Activated CD4-positive, alpha-beta memory T cell treated with anti-CD3 and anti-CD28 coated beads for 36 hours (primary cell): ENCODE measurements at regions of chr6 and their contacts with region 1.

Region 1: GRCh38 chr6:37566111-37566949 is 66.6 kb upstream of the CCDC167 start:
- DNase-seq: peak; percentile 82
- H3K4me3 Mint-ChIP-seq: peak overlapping the region; percentile 27
- H3K27ac Mint-ChIP-seq: no peak overlapping the region
- H3K4me1 Mint-ChIP-seq: peaks cover 5% of the 10 kb centered on the region
- H3K27me3 Mint-ChIP-seq: no peaks in the 10 kb centered on the region

Region 2: DNA sequence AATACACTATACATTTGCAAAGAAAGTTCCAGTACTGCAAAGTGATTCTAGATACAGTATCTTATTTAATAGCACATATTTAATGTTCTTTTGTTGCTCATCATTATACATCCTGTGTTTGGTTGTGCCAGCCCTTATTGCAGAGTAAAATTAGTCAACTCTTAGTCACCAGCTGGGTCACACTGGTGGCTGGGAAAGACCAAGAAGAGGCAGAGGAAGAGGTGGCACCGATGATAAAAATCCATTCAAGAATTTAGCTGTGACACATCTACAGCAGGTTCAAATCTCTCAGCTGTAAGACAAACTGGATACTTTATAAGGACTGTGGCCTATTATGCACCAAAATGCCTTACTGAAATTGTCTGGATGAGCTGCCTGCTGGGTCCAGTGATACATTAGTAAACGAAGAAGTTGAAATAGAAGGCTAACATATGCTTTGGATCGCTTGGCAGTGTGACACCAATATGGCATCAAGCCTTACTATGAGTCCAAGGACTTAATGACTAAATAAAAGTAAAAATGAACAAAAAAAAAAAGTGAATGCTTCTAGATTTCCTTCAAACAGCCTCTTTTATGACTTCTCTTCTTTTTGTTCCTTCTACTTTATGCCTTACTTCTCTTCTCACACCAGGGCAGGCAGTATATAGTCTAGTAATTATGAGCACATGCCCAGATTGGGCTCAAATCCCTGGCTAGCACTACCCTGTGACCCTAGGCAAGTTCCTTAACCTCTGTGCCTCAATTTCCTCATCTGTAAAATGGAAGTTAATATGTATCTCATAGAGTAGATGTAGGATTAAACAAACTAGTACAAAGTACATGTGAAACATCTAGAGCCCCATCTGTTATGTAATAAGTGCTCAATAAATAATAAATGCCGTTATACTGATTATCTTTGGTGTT is 241.9 kb before region 1 on chr6:
- CTCF ChIA-PET with region 1: interaction called, 8 read pairs
- POLR2A ChIA-PET with region 1: no interaction called
- intact Hi-C with region 1: loop called (anchors 2 kb)
- DNase-seq: peak; percentile 67
- H3K4me3 Mint-ChIP-seq: no peak overlapping the region
- H3K27ac Mint-ChIP-seq: no peak overlapping the region
- H3K4me1 Mint-ChIP-seq: peaks cover 22% of the 10 kb centered on the region
- H3K27me3 Mint-ChIP-seq: no peaks in the 10 kb centered on the region

Region 3: DNA sequence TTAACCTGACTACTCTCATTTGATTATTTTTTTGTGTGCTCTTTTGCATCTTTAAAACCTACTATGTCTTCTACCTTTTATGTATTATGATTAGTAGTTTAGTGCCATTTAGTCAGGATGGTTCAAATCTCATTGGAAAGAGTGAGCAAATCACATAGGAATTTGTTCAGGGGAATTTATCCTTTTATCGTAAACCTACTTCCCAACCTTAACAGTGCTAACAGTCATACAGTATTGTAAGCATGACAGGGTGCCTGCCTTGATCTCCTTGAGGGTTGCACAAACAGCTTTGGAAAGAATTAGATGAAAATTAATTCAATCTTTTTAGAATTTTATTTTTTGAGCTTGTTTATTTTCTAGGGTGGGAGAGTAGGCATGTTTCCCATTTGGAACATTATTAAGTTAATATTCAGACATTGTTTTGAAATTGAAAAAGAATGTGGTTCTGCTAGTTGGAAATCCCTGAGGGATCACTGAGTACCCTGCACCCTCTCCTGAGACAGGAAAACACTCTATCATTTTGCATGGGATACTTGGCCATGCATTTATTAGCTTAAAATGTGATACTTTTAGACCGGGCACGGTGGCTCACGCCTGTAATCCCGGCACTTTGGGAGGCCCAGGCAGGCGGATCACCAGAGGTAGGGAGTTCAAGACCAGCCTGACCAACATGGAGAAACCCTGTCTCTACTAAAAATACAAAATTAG is 194.1 kb before region 1 on chr6:
- CTCF ChIA-PET with region 1: no interaction called
- POLR2A ChIA-PET with region 1: no interaction called
- intact Hi-C with region 1: no loop called
- DNase-seq: no peak
- H3K4me3 Mint-ChIP-seq: no peak overlapping the region
- H3K27ac Mint-ChIP-seq: no peak overlapping the region
- H3K4me1 Mint-ChIP-seq: peaks cover 5% of the 10 kb centered on the region
- H3K27me3 Mint-ChIP-seq: no peaks in the 10 kb centered on the region

Region 4: DNA sequence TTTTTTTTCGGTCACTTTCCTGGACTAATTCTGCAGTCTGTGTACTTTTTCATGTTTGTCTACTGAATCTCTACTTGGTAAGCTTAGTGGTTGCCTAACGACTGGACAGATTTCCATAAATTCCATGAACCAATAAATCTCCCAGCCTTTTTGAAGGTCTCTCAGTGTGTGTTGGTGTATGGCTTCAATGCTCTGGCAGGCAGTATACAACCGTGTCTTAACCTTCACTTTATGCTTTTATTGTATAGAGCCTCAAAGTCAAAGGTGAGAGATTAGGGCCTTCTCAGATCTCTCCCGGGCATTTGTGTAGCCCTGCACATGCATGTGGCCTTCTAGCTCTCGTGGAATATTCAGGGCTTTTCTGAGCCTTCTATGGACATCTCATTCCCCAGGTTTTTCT is 147.6 kb before region 1 on chr6:
- CTCF ChIA-PET with region 1: no interaction called
- POLR2A ChIA-PET with region 1: no interaction called
- intact Hi-C with region 1: no loop called
- DNase-seq: no peak
- H3K4me3 Mint-ChIP-seq: no peak overlapping the region
- H3K27ac Mint-ChIP-seq: no peak overlapping the region
- H3K4me1 Mint-ChIP-seq: no peaks in the 10 kb centered on the region
- H3K27me3 Mint-ChIP-seq: no peaks in the 10 kb centered on the region

Region 5: GRCh38 chr6:37489660-37490361 is 76.5 kb before region 1 on chr6:
- CTCF ChIA-PET with region 1: interaction called, 43 read pairs
- POLR2A ChIA-PET with region 1: no interaction called
- intact Hi-C with region 1: no loop called
- DNase-seq: peak; percentile 51
- H3K4me3 Mint-ChIP-seq: no peak overlapping the region
- H3K27ac Mint-ChIP-seq: peak overlapping the region; percentile 76
- H3K4me1 Mint-ChIP-seq: peaks cover 70% of the 10 kb centered on the region
- H3K27me3 Mint-ChIP-seq: no peaks in the 10 kb centered on the region

Region 6: DNA sequence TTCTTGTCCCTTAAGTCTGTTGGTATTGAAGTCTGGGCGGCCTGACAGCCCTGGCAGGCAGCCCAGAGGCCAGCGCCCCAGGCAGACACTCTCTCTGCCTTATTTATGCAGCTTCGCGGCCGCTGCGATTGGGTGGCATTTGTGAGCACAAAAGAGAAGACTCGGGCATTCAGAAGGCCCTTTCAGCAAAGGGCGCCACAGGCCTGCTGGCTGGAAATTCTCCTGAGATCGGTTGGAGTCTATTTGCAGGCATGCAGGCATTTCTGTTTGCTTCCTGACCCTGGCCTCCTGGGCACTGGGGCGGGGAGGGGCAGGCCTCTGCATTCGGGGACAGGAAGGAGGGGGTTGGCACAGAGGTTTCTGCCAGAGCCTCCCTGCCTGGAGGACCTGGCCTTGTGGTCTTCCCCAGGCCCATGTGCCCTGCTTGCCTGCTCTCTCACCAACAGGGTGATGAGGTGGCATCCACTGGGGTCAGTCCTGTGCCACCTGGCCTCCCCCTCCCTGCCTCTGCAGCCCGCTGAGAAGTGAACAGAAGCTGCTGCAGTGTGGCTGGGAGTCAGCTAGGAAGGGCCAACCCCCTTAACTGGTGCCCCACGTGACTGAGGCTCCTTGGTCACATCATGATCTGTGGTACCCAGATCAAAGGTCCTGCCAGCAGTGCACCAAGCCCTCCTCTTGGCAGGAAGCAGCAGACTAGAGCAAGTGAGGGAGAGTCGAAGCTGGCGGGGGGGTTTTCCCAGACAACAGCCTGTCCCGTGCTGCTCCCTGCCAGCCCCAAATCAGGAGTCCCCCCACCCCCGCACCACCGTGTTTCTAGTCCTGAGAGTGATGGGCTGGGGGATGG is 50.0 kb before region 1 on chr6:
- CTCF ChIA-PET with region 1: interaction called, 10 read pairs
- POLR2A ChIA-PET with region 1: no interaction called
- intact Hi-C with region 1: no loop called
- DNase-seq: peak; percentile 96
- H3K4me3 Mint-ChIP-seq: peak overlapping the region; percentile 78
- H3K27ac Mint-ChIP-seq: peak overlapping the region; percentile 95
- H3K4me1 Mint-ChIP-seq: peaks cover 82% of the 10 kb centered on the region
- H3K27me3 Mint-ChIP-seq: no peaks in the 10 kb centered on the region

Region 7: GRCh38 chr6:37547564-37548061 is 18.7 kb before region 1 on chr6:
- CTCF ChIA-PET with region 1: interaction called, 10 read pairs
- POLR2A ChIA-PET with region 1: no interaction called
- intact Hi-C with region 1: no loop called
- DNase-seq: peak; percentile 23
- H3K4me3 Mint-ChIP-seq: no peak overlapping the region
- H3K27ac Mint-ChIP-seq: no peak overlapping the region
- H3K4me1 Mint-ChIP-seq: peaks cover 19% of the 10 kb centered on the region
- H3K27me3 Mint-ChIP-seq: no peaks in the 10 kb centered on the region

Region 8: DNA sequence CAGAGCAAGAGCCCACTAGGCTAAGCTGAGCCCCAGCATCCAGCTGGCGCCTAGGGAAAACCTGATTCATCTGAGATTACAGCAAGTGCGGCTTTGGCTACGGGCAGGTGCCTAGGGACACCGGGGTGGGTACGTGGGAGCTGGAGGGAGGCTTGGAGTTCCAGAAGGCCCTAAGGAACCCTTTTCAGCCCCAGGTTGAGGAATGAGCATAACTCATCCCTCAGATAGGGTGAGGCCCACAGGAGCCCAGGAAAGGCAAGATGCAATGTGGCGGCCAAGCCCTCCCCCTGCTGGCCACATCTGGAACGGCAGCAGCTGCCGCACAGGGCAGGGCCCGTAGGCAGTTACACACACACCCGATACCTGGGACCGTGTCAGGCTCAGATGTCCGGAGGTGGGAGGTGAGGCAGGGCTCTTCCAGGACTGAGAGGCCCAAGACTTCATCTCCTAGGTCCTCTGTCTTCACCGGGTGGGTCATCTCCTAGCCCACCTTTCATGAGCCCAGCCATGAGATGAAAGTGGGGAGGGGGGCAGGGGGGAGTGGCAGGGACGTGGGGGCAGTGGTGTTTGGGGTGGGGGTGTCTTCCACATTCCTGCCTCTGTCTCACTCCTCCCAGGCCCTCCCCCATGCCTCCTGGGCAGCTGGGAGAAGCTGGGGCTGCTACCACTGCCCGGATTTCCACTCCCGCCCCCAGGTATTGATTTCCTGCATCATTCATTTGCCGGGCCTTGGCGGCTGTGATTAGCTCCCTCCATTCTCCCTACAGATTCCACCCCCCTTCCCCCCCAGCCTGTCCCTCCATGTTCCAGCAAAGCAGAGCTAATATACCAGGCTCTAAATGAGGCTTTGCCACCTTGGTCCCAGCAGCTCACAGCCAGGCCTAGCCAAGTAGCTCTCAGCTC is 125.8 kb after region 1 on chr6:
- CTCF ChIA-PET with region 1: interaction called, 13 read pairs
- POLR2A ChIA-PET with region 1: no interaction called
- intact Hi-C with region 1: loop called (anchors 5 kb)
- DNase-seq: peak; percentile 88
- H3K4me3 Mint-ChIP-seq: no peak overlapping the region
- H3K27ac Mint-ChIP-seq: no peak overlapping the region
- H3K4me1 Mint-ChIP-seq: peaks cover 21% of the 10 kb centered on the region
- H3K27me3 Mint-ChIP-seq: peaks cover 6% of the 10 kb centered on the region

Region 9: GRCh38 chr6:39209360-39209811 is 1643.1 kb after region 1 on chr6:
- CTCF ChIA-PET with region 1: no interaction called
- POLR2A ChIA-PET with region 1: no interaction called
- intact Hi-C with region 1: no loop called
- DNase-seq: peak; percentile 11
- H3K4me3 Mint-ChIP-seq: no peak overlapping the region
- H3K27ac Mint-ChIP-seq: no peak overlapping the region
- H3K4me1 Mint-ChIP-seq: peaks cover 17% of the 10 kb centered on the region
- H3K27me3 Mint-ChIP-seq: no peaks in the 10 kb centered on the region